ENCODE measurements at regions of chr16 and their contacts with region 1.

Region 1: GRCh38 chr16:23235176-23235575 is 52.6 kb downstream of the SCNN1G start:
- DNase-seq: no peak
- H3K4me3 ChIP-seq: no peak overlapping the region
- H3K27ac ChIP-seq: no peak overlapping the region
- H3K4me1 ChIP-seq: peaks cover 8 to 12% of the 10 kb centered on the region in 2 donors
- H3K27me3 ChIP-seq: no peaks in the 10 kb centered on the region
- CTCF ChIP-seq: no peak
- POLR2A ChIP-seq: no peak

Region 2: DNA sequence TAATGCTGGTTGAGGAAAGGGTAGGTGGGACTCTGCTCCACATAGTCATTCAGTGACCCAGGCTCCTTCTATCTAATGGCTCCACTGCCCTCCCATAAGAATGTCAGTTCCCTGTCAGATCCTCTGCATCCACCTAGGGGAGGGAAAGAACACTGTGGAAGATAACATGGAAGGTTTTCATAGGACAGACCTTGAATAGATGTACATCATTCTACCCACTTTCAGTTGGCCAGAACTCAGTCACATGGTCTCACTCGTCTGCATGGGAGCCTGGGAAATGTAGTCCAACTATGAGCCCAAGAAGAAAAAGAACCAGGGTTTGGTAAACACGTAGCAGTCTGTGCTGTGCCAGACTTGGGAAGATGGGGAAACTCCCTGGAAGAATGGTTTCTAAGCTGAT is 39.8 kb after region 1 on chr16:
- intact Hi-C with region 1: loop called (anchors 5 kb)
- DNase-seq: no peak
- H3K4me3 ChIP-seq: no peak overlapping the region
- H3K27ac ChIP-seq: no peak overlapping the region
- H3K4me1 ChIP-seq: peaks cover 15 to 19% of the 10 kb centered on the region in 2 donors
- H3K27me3 ChIP-seq: no peaks in the 10 kb centered on the region
- CTCF ChIP-seq: no peak
- POLR2A ChIP-seq: no peak

Measured in thyroid gland (tissue), 4 donors.